Cardiac septum (tissue), 1 donor: ENCODE measurements at regions of chr22 and their contacts with region 1.

Region 1: GRCh38 chr22:24106385-24107381 is 74.6 kb upstream of the SUSD2 start:
- DNase-seq: no peak

Region 2: GRCh38 chr22:24156913-24157821 is 50.5 kb after region 1 on chr22:
- intact Hi-C with region 1: loop called (anchors 5 kb)
- DNase-seq: peak; percentile 95

Region 3: DNA sequence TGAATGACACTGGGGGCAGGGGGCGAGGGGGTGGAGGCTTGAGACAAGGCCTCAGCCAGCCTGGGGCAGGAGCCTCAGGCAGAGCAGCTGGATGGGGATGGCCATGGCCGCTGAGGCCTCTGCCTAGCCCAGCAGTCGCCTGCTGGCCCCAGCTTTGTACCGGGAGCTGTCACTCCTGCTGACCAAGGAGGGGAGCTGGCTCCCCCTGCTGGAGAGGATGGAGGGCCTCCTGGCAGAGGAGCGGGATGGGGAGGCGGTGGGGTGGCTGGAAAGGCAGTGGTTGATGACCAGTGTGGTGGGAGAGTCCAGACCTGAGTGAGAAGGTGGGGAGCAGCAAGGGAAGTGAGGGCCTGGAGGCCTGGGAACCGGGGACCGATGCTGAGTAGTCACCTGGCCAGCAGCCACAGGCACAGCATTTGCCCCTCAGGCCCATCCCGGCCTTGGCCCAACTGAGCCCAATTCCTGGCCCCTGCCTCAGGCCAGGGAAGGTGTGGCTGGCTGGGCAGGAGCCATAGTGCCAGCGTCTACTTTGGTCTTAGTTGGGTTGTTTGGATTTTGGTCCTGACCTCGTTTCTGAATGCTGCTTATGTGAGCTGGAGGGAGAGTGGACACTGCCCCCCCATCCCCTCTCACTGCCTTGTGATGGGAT is 68.6 kb after region 1 on chr22:
- intact Hi-C with region 1: loop called (anchors 1 kb)
- DNase-seq: peak; percentile 92

Region 4: GRCh38 chr22:24244101-24244787 is 137.6 kb after region 1 on chr22:
- intact Hi-C with region 1: loop called (anchors 10 kb)
- DNase-seq: no peak